ENCODE measurements at regions of chr10 and their contacts with region 1.

Region 1: GRCh38 chr10:99395750-99396445 is 34.5 kb downstream of the GOT1 start:
- DNase-seq: no peak
- H3K4me3 ChIP-seq: no peak overlapping the region
- H3K27ac ChIP-seq: peak overlapping the region; percentile 67 to 77; a peak in 3 of 4 replicates
- H3K4me1 ChIP-seq: peaks cover 0 to 12% of the 10 kb centered on the region in 2 experiments; a peak in 2 of 4 replicates
- H3K27me3 ChIP-seq: no peaks in the 10 kb centered on the region
- CTCF ChIP-seq: no peak
- EP300 ChIP-seq: no peak
- RAD21 ChIP-seq: no peak

Region 2: GRCh38 chr10:99266387-99266786 is 129.5 kb before region 1 on chr10:
- CTCF ChIA-PET with region 1: no interaction called
- POLR2A ChIA-PET with region 1: no interaction called
- DNase-seq: no peak
- H3K4me3 ChIP-seq: no peak overlapping the region
- H3K27ac ChIP-seq: no peak overlapping the region
- H3K4me1 ChIP-seq: no peaks in the 10 kb centered on the region; a peak in 1 of 4 replicates
- H3K27me3 ChIP-seq: no peaks in the 10 kb centered on the region
- CTCF ChIP-seq: no peak
- EP300 ChIP-seq: no peak
- RAD21 ChIP-seq: no peak

Region 3: GRCh38 chr10:99375444-99375843 is 20.5 kb before region 1 on chr10:
- CTCF ChIA-PET with region 1: interaction called, 10 read pairs
- POLR2A ChIA-PET with region 1: no interaction called
- DNase-seq: no peak
- H3K4me3 ChIP-seq: no peak overlapping the region
- H3K27ac ChIP-seq: no peak overlapping the region
- H3K4me1 ChIP-seq: peaks cover 5 to 9% of the 10 kb centered on the region in 2 experiments; a peak in 2 of 4 replicates
- H3K27me3 ChIP-seq: no peaks in the 10 kb centered on the region; the same call in 1 of the 2 replicates
- CTCF ChIP-seq: no peak
- EP300 ChIP-seq: no peak
- RAD21 ChIP-seq: no peak

Region 4: DNA sequence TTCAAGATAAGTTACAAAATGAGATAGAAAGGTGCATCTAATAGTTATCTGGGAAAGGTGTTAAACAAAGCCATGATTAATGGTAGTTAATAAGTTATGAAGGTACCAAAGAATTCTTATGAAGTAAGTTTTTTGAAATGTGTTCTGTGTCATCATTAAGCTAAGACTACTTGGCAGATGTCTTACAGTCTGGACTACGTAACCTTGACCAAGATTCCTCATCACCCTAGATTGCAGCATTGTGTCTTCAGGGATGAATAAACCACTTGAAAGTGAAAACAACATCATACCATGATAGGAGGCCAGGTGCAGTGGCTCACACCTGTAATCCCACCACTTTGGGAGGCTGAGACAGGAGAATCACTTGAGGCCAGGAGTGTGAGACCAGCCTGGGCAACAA is 13.7 kb before region 1 on chr10:
- CTCF ChIA-PET with region 1: interaction called, 15 read pairs
- POLR2A ChIA-PET with region 1: no interaction called
- DNase-seq: no peak
- H3K4me3 ChIP-seq: no peak overlapping the region
- H3K27ac ChIP-seq: no peak overlapping the region
- H3K4me1 ChIP-seq: no peaks in the 10 kb centered on the region
- H3K27me3 ChIP-seq: no peaks in the 10 kb centered on the region; the same call in 1 of the 2 replicates
- CTCF ChIP-seq: no peak
- EP300 ChIP-seq: no peak
- RAD21 ChIP-seq: no peak

Region 5: DNA sequence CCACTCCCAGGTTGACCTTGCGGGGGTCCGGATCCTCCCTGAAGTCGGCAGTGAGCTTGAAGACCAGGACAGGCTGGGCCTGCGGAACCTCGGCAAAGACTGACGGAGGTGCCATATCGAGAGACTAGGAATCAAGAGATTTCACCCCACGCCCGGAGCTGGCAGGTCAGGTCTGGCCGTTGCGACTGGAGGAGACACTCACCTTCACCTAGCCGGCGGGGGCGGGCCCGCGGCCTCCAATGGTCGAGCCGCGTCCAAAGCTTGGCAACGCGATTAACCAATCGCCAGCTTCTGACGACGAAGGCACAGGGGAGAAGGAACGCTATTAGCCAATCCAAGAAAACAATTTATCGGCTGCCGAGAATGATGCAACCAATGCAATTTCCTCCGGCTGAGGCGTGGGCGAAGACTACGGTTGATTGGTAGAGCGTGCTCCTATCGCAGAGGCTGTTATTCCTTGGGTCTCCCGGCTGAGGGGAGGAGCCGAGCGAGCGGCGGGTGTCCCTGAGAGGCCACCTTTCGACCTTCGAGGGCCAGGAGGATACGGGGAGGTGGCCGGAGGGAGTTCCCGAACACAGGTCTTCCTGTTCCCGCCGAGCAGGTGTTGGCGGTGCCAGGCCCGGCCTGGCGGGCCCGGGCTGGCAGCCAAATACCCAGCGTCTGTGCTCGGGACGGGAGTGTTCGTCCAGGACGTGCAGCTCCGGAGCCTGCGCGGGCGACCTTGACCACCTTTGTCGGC is 34.7 kb after region 1 on chr10 and contains the start of gene GOT1:
- CTCF ChIA-PET with region 1: interaction called, 13 read pairs
- POLR2A ChIA-PET with region 1: interaction called, 3 read pairs
- DNase-seq: peak; percentile 97
- H3K4me3 ChIP-seq: peak within 1 kb of the TSS; percentile 98
- H3K27ac ChIP-seq: peak within 1 kb of the TSS; percentile 49 to 60
- H3K4me1 ChIP-seq: peaks cover 8 to 10% of the 10 kb centered on the region in 2 experiments; a peak in 2 of 4 replicates
- H3K27me3 ChIP-seq: no peaks in the 10 kb centered on the region
- CTCF ChIP-seq: no peak; the same call in 1 of the 2 replicates
- EP300 ChIP-seq: no peak
- RAD21 ChIP-seq: no peak
- polyA plus RNA-seq, gene GOT1: 9.8 and 10.9 TPM in 2 replicates

Region 6: DNA sequence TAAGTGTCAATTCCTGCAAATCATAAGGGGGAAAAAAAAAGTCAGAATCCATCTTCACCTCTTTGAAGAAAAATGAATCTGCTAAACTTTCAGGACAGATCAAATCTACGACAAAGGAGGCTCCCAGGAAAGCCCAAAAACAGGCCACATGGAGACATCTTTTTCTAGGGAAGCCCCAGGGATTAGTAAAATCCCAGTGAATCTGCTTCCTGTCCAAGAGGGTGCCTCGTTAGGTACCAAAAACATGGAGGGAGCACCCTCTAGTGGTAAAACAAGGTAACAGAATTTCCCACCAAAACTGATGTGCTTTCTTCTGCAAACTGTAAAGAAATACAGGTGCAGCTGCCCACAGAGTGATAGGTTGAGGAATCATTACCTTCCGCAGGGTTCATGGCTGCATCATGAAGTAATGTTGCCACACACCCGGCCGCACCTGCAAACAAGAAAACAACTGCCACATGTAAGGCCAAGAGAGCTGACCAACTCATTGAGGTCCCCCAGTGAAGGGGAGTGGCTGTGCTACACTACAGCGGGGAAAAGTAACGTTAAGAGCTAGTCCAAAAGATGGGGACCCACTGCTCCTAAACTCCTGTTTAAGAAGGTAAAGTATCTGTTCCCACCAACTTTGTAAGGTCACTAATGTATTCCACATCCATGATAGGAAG is 216.4 kb after region 1 on chr10:
- CTCF ChIA-PET with region 1: interaction called, 24 read pairs
- POLR2A ChIA-PET with region 1: no interaction called
- DNase-seq: peak; percentile 77
- H3K4me3 ChIP-seq: peak overlapping the region in 1 of 2 experiments; percentile 11; a peak in 1 of 4 replicates
- H3K27ac ChIP-seq: no peak overlapping the region
- H3K4me1 ChIP-seq: no peaks in the 10 kb centered on the region; a peak in 1 of 4 replicates
- H3K27me3 ChIP-seq: no peaks in the 10 kb centered on the region
- CTCF ChIP-seq: peak; percentile 84
- EP300 ChIP-seq: no peak
- RAD21 ChIP-seq: peak; percentile 87

Measured in SK-N-SH (cell line).